Right ventricle myocardium superior (tissue), 1 donor: ENCODE measurements at regions of chr15 and their contacts with region 1.

Region 1: DNA sequence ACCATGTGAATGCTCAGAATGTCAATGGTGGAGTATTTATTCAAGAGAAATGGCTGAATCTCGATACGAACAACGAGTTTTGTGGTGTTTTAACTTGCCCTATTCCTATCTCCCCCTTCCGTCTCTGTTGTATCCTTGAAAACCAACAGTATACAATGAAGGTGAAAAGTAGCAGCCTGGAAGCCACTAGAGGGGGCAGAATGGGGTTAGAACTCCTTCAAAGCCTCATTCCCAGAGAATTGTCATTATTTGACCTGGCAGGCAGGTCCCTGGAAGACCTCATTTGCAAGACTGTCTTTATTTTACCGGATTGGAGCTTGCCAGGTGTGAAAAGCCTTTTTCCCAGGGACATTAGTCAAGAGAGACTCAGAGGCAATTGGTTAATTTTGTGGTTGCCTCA is 139.4 kb downstream of the LRRC28 start:
- DNase-seq: no peak
- ATAC-seq: no peak

Region 2: GRCh38 chr15:99104788-99105513 is 285.7 kb before region 1 on chr15 and contains the start of gene SYNM:
- intact Hi-C with region 1: no loop called
- DNase-seq: peak; percentile 88
- ATAC-seq: peak; percentile 84
- total RNA-seq, gene SYNM: 295 TPM

Region 3: GRCh38 chr15:99296386-99296785 is 94.3 kb before region 1 on chr15:
- intact Hi-C with region 1: loop called (anchors 10 kb)
- DNase-seq: no peak
- ATAC-seq: no peak

Region 4: GRCh38 chr15:99307735-99308134 is 82.9 kb before region 1 on chr15:
- intact Hi-C with region 1: no loop called
- DNase-seq: no peak
- ATAC-seq: no peak